OCI-LY7 (cell line): ENCODE measurements at regions of chr4 and their contacts with region 1.

Region 1: GRCh38 chr4:40744218-40744617 is 5.5 kb upstream of the NSUN7 start:
- DNase-seq: no peak
- H3K4me3 ChIP-seq: no peak overlapping the region
- H3K27ac ChIP-seq: no peak overlapping the region
- H3K4me1 ChIP-seq: no peaks in the 10 kb centered on the region
- CTCF ChIP-seq: no peak

Region 2: DNA sequence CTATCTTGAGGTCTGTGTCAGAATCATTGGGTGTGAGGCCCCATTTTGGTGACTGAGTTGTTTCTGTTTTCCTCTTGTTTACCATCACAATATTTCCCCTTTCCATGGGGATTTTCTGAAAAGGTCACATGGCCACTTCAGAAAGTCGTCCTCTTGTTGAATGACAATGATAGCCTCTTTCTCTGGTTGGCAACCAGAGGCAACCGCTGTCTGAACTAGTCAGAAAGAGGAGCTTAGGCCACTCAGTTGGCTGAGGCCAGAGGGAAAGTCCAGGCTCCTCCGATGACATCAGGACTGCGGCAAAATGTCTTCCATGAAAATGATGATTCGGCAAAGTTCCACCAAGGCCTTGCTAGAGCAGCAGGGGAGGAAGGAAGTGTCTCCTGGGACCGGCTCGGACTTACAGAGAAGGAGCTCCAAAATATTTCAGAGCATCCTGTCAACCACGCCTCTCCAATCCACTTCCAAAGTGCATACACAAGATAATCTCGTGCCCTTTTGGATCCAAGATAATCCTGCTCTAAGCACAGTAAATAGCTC is 95.4 kb before region 1 on chr4:
- CTCF ChIA-PET with region 1: no interaction called
- POLR2A ChIA-PET with region 1: no interaction called
- intact Hi-C with region 1: no loop called
- DNase-seq: no peak
- H3K4me3 ChIP-seq: no peak overlapping the region
- H3K27ac ChIP-seq: no peak overlapping the region
- H3K4me1 ChIP-seq: no peaks in the 10 kb centered on the region
- CTCF ChIP-seq: no peak

Region 3: DNA sequence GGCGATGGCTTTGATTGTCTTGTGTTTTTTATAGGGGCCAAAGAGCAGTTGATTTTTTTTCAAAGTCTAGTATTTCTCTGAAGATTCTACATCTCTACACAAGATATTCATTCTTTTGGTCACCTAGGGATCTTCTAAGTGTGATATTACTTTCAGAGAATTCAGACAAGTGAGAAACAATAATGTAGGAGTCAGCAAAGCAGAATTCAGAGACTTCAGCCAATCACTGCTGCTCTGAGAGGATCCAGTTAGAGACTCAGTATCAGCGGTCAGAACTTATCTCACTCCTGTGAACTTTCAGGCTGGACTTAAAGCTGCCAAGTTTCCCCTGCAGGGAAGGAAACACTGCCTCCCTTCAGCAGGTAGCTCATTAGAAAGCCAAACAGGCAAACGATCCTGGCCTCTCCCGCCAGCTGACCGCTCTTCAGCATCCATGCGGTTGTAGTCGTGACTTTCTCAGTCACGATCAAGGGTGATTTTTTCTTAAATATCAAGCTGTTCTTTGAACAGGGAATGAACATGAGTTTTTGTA is 64.8 kb after region 1 on chr4:
- CTCF ChIA-PET with region 1: no interaction called
- POLR2A ChIA-PET with region 1: no interaction called
- intact Hi-C with region 1: loop called (anchors 5 kb)
- DNase-seq: no peak
- H3K4me3 ChIP-seq: no peak overlapping the region
- H3K27ac ChIP-seq: no peak overlapping the region
- H3K4me1 ChIP-seq: no peaks in the 10 kb centered on the region
- CTCF ChIP-seq: no peak